ENCODE measurements at regions of chr2 and their contacts with region 1.

Region 1: DNA sequence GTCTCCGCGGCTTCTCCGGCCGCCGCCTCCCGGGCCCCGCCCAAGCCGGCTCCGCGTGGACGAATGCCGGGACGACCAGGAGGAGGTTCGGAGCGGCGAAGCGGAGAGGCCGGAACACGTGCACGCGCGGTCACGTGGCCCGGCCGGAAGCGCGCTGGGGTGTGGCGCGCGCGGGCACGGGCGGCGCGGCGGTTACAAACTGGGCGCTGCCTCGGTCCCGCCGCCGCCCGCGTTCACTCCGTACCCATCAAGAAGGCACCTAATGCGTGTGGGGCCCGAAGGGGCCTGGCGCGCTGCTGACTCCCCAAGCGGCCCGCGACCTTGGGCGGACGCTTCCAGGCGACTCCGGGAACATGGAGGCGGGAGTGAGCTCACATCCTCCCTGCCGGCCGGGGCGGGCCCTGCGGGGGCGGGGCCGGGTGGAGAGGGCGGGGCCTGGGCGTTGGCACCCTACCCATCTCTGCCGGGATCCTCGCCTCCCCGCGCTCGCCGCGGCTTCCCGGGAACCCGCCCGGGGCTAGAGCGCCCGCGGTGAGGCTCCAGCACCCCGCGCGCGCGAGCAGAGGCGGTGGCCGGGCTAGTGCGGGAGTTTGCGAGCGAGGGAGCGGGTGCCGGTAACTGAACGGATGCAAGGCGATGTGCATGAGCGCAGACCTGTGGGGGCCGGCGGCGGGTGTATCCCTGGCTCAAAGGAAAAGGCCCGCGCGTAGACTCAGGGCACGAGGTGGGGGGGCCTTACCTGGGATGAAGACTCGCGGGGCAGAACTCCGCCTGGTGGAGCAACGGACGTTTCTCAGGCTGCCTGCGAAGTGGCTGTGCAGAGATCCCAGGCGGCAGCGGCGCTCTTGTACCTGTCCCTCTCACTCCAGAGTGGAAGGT is at the start of gene TMEM185B:
- DNase-seq: peak; percentile 95

Region 2: GRCh38 chr2:120245354-120245791 is 22.1 kb after region 1 on chr2:
- CTCF ChIA-PET with region 1: no interaction called
- POLR2A ChIA-PET with region 1: interaction called, 10 read pairs
- DNase-seq: peak; percentile 71

Measured in HEK293T (cell line).